Right lobe of liver (tissue), 6 donors: ENCODE measurements at regions of chr3 and their contacts with region 1.

Region 1: DNA sequence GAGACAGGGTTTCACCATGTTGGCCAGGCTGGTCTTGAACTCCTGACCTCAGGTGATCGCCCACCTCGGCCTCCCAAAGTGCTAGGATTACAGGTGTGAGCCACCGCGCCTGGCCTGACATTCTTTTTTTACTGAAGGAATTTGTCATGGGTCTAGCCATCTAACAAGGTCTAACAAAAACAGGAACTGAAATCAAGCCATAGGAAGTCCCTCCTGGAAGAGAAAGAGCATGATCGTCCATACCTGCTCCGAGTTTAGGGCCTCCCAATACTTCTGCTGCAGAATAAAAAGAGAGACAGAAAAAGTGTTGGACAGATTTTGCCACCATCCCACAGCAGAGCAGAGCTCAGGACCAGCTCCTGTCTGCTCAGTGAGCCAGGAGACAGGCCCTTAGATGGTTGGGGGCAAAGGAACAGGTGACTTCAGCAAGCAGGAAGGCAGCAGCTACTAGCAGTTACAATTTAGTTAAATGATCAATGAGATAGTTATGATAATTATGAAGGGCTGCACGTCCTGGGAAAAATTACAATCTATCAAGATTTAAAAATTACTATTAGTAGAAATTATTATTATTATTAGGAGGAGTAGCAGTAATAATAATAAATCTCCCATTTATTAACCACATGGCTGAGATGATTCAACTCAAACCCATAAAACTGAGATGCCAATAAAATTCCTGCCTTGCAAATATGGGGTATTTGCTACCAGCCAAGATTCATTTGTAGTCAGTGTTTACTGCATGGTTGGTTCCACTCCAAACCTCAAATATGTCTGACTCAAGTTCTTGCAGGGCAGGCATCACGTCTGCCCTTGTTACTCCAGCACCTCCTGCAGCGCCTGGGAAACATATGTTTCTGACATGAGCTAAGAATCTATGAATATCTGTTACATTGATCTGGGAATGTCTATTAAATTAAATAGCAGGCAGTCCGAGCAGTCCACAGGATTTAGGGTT is 40.1 kb downstream of the TMEM44 start:
- DNase-seq: no peak
- ATAC-seq: peak in 1 of 4 donors; percentile 31
- H3K4me3 ChIP-seq: no peak overlapping the region
- H3K27ac ChIP-seq: no peak overlapping the region
- H3K4me1 ChIP-seq: no peaks in the 10 kb centered on the region
- H3K27me3 ChIP-seq: no peaks in the 10 kb centered on the region
- CTCF ChIP-seq: no peak
- POLR2A ChIP-seq: no peak

Region 2: GRCh38 chr3:194333212-194333980 is 259.7 kb before region 1 on chr3:
- intact Hi-C with region 1: loop called in 1 of 2 experiments (anchors 10 kb)
- DNase-seq: peak; percentile 91 to 93 (median 92)
- ATAC-seq: peak; percentile 84 to 91 (median 86)
- H3K4me3 ChIP-seq: peak overlapping the region; percentile 41 to 53 (median 49)
- H3K27ac ChIP-seq: peak overlapping the region; percentile 55 to 78 (median 62)
- H3K4me1 ChIP-seq: peaks cover 0 to 34% (median 15%) of the 10 kb centered on the region in 4 donors
- H3K27me3 ChIP-seq: no peaks in the 10 kb centered on the region
- CTCF ChIP-seq: peak; percentile 98 to 100 (median 100)
- POLR2A ChIP-seq: peak; percentile 15

Region 3: DNA sequence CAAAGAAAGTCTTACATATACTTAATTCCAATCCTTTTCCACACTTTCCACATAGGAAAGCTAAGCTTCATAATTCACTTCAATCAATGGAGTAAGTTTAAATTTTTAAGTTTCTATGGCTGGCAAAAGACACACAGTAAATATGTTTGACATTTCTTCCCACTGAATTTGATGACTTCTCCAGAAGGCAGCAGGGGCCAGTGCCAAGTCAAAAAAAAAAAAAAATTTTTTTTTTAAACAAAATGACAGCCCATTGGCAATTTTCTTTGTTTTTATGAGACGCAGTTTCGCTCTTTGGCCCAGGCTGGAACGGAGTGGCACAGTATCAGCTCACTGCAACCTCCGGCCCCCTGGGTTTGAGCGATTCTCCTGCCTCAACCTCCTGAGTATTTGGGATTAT is 134.9 kb before region 1 on chr3:
- intact Hi-C with region 1: no loop called
- DNase-seq: no peak
- ATAC-seq: no peak
- H3K4me3 ChIP-seq: no peak overlapping the region
- H3K27ac ChIP-seq: no peak overlapping the region
- H3K4me1 ChIP-seq: peaks cover 0 to 17% (median 7%) of the 10 kb centered on the region in 4 donors
- H3K27me3 ChIP-seq: no peaks in the 10 kb centered on the region
- CTCF ChIP-seq: no peak
- POLR2A ChIP-seq: no peak

Region 4: GRCh38 chr3:194532591-194532990 is 60.5 kb before region 1 on chr3:
- intact Hi-C with region 1: no loop called
- DNase-seq: no peak
- ATAC-seq: no peak
- H3K4me3 ChIP-seq: no peak overlapping the region
- H3K27ac ChIP-seq: no peak overlapping the region
- H3K4me1 ChIP-seq: peaks cover 0 to 16% (median 7%) of the 10 kb centered on the region in 4 donors
- H3K27me3 ChIP-seq: no peaks in the 10 kb centered on the region
- CTCF ChIP-seq: no peak
- POLR2A ChIP-seq: no peak

Region 5: GRCh38 chr3:194727435-194728128 is 134.5 kb after region 1 on chr3:
- intact Hi-C with region 1: no loop called
- DNase-seq: no peak
- ATAC-seq: no peak
- H3K4me3 ChIP-seq: no peak overlapping the region
- H3K27ac ChIP-seq: no peak overlapping the region
- H3K4me1 ChIP-seq: no peaks in the 10 kb centered on the region
- H3K27me3 ChIP-seq: no peaks in the 10 kb centered on the region
- CTCF ChIP-seq: no peak
- POLR2A ChIP-seq: no peak